Ascending aorta (tissue), 2 donors: ENCODE measurements at regions of chr21 and their contacts with region 1.

Region 1: DNA sequence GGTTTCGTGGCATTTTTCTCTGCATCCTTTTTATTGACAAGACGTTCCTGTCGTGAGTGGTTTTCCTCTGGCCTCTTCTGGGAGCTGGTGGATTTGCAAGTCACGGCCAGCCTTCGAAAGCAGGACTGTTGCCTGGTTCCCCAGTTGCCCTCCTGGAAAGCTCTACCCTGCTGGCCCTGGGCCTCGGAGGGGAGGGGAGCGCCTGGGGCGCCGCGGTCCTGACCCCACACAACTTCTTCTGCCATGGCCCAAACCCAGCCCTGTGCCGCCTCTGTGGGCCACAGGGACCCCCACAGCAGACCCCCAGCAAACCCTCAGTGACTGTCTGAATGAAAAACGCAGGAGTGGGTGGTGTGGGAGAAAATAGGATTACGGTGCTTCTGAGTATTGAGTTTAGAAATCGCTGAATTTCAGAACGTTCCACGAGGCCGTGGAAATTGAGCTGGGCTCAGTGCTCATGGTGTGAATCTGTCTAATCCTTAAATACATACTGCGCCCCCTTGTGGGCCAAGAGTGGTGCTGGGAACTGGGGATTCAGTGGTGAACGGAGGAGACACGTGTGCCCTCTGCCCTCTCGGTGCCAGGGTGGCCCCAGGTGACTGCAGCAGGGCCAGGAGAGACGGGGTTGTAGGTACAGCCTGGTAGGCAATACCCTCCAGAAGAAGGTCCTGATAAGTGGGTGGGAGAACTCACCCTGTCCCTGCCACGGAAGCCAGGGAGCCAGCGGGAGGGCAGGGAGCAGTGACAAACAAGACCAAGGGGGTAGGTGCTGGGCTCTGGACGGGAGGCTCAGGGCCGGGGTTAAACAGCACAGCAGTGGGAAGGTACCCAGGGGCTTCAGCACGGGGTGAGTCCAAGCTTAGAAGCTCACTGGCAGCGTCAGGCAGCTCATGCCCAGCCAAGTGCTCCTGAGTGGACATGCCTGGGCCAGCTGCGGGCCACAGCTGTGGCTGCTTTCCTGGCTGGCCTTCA is 101.2 kb upstream of the COL6A1 start:
- DNase-seq: peak in 1 of 2 donors; percentile 80
- H3K4me3 ChIP-seq: no peak overlapping the region
- H3K27ac ChIP-seq: no peak overlapping the region
- H3K4me1 ChIP-seq: no peaks in the 10 kb centered on the region
- H3K27me3 ChIP-seq: no peaks in the 10 kb centered on the region
- CTCF ChIP-seq: peak; percentile 20 to 63 (median 45)

Region 2: DNA sequence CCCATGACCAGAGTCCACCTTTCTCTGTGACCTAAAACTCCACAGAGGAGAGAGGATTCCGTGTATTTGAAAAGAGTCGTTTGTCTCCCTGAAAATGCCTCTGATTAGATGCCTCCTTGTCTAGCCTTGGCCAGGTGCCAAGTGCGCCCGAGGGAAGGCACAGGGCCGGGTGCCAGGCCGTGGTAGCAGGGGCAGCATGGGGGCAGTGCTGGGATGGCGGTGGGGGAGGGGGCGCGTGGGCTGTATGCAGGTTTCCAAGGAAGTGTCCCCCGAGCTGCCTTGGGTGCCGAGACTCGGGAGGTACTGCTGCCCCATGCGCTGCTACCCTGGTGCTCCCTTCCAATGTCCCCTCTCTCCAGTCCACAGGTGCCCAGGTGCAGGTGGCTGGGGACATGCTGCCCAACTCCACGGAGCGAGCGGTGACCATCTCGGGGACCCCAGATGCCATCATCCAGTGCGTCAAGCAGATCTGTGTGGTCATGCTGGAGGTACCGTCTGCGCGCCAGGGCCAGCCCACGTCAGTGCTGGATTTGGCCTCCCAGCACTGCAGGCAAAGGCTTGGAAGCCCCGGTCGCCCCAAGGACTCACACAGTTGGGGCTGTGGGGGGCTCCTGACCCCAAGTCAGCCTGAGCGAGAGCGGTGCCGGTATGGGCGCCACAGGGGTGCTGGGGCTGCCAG is 30.3 kb after region 1 on chr21:
- intact Hi-C with region 1: no loop called
- DNase-seq: no peak
- H3K4me3 ChIP-seq: no peak overlapping the region
- H3K27ac ChIP-seq: no peak overlapping the region
- H3K4me1 ChIP-seq: no peaks in the 10 kb centered on the region
- H3K27me3 ChIP-seq: no peaks in the 10 kb centered on the region
- CTCF ChIP-seq: no peak

Region 3: DNA sequence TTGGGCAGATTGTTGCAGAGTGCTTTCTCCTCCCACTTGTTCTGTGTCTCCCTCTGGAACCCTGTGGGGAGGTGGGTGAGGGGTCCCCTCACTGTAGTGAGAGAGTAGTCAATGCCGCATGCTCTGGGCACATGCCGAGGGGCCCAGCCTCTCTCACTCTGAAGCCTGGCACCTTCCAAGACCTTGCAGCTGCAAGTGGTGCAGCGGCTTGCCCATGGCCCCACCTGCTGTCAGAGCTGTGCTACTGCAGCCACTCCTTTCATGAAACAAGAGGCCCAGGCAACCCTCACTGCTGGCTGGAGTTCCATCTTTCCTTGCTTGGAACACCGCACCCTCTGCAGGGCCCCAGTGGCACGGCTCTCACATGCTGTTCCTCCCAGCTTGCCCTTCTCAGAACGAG is 42.8 kb after region 1 on chr21:
- intact Hi-C with region 1: loop called (anchors 2 kb)
- DNase-seq: peak in 1 of 2 donors; percentile 80
- H3K4me3 ChIP-seq: no peak overlapping the region
- H3K27ac ChIP-seq: no peak overlapping the region
- H3K4me1 ChIP-seq: peaks cover 0 to 3% of the 10 kb centered on the region in 2 donors
- H3K27me3 ChIP-seq: no peaks in the 10 kb centered on the region
- CTCF ChIP-seq: peak; percentile 76 to 97 (median 94)

Region 4: DNA sequence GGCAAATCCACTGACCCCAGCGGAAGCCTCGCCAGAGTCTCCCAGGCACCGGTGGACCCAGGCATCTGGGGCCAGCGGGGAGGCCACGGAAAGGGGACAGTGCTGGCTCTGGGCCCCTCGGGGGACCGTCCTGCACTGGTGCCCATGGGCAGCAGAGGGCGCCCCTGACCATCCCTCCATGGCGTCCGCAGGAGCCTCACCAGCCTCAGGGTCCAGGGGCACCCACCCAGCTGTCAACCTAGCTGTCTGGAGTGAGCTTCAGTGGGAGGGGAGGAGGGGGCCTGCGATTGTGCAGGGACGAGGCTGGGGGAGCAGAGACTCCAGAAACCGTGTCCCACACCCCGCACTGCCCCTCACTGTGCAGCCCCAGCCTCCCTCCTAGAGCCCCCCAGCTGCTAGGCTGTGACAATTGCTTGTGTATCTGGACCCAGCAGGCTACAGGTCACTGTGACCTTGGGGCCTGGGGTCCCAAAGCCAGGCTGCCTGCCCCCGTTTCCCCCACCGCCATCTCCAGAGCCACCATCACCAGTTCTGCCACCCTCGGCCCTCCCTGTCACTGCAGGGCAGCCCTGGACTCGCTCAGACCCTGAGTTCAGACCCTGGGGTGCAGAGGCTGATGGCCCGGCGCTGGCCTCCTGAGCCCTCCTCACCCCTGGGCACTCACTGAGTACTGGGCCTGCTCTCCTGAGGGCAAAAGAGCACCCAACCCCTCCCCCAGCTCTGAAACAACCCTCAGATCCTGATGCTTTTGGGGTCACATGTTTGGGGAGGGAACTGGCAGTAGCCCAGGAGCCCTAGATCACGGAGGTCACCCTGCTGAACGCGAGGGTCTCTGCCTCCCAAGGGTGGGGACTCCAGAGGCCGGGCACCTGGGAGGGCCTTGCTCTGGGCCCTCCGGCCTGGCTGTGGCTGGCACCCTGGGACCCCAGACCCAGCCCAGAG is 90.6 kb after region 1 on chr21:
- intact Hi-C with region 1: no loop called
- DNase-seq: peak in 1 of 2 donors; percentile 79
- H3K4me3 ChIP-seq: peak overlapping the region in 1 of 2 donors; percentile 75
- H3K27ac ChIP-seq: peak overlapping the region; percentile 98 to 99
- H3K4me1 ChIP-seq: peaks cover 33 to 41% of the 10 kb centered on the region in 2 donors
- H3K27me3 ChIP-seq: no peaks in the 10 kb centered on the region
- CTCF ChIP-seq: peak; percentile 92 to 97 (median 95)